GM12878 (cell line): ENCODE measurements at regions of chr2 and their contacts with region 1.

Region 1: GRCh38 chr2:210503001-210503623 is 26.6 kb upstream of the LANCL1 start:
- DNase-seq: no peak
- ATAC-seq: peak; percentile 89
- H3K4me3 ChIP-seq: no peak overlapping the region
- H3K27ac ChIP-seq: no peak overlapping the region
- H3K4me1 ChIP-seq: no peaks in the 10 kb centered on the region
- H3K27me3 ChIP-seq: no peaks in the 10 kb centered on the region
- CTCF ChIP-seq: peak; percentile 78 to 96 (median 91)
- EP300 ChIP-seq: no peak
- POLR2A ChIP-seq: no peak
- RAD21 ChIP-seq: peak; percentile 52; the same call in 1 of the 2 replicates

Region 2: DNA sequence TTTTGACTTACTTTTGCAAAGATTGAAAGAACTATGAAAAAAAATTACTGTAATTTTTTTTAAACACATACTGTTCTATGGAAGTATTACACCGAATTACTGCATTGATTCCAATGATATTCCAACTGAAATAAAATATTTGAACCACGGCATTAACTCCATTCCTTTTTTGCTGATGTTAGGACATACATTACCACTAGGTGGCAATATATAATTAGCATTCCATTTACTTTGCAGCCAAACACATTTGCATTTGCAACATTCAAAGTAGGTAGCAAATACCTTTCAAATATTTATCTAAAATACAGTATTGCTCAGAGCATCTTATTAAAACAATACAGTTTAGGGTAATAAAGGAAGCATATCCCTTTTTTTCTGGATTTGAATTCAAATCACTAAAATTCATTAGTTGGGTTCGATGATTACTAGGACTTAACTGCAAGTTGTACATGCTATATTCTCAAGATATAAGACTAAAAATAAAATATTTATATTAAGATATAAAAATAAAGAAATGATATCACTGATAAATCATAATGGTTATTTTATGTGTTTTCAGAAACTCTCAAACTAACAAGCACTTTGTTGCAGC is 57.9 kb before region 1 on chr2:
- CTCF ChIA-PET with region 1: interaction called, 13 read pairs
- POLR2A ChIA-PET with region 1: no interaction called
- RAD21 ChIA-PET with region 1: no interaction called
- SMC1A ChIA-PET with region 1: interaction called, 13 read pairs
- in situ Hi-C with region 1: no loop called
- intact Hi-C with region 1: loop called (anchors 2 kb)
- DNase-seq: no peak
- ATAC-seq: peak; percentile 58
- H3K4me3 ChIP-seq: no peak overlapping the region
- H3K27ac ChIP-seq: no peak overlapping the region
- H3K4me1 ChIP-seq: peaks cover 5% of the 10 kb centered on the region
- H3K27me3 ChIP-seq: no peaks in the 10 kb centered on the region
- CTCF ChIP-seq: peak; percentile 52 to 62 (median 53)
- EP300 ChIP-seq: no peak
- POLR2A ChIP-seq: no peak
- RAD21 ChIP-seq: peak; percentile 64

Region 3: GRCh38 chr2:210476194-210477128 is 26.7 kb before region 1 on chr2 and contains the start of gene LANCL1:
- CTCF ChIA-PET with region 1: interaction called, 20 read pairs
- POLR2A ChIA-PET with region 1: interaction called, 3 read pairs
- RAD21 ChIA-PET with region 1: interaction called, 3 read pairs
- SMC1A ChIA-PET with region 1: interaction called, 12 read pairs
- in situ Hi-C with region 1: no loop called
- intact Hi-C with region 1: no loop called
- DNase-seq: peak; percentile 67
- ATAC-seq: peak; percentile 100
- H3K4me3 ChIP-seq: peak within 1 kb of the TSS; percentile 90
- H3K27ac ChIP-seq: peak within 1 kb of the TSS; percentile 80
- H3K4me1 ChIP-seq: no peaks in the 10 kb centered on the region
- H3K27me3 ChIP-seq: no peaks in the 10 kb centered on the region
- CTCF ChIP-seq: no peak; a peak in 1 of 6 replicates
- EP300 ChIP-seq: no peak
- POLR2A ChIP-seq: peak; percentile 90
- RAD21 ChIP-seq: no peak
- polyA plus RNA-seq, gene LANCL1: 13.6 to 18.4 TPM

Region 4: GRCh38 chr2:210519594-210519993 is 16.5 kb after region 1 on chr2:
- CTCF ChIA-PET with region 1: interaction called, 37 read pairs
- POLR2A ChIA-PET with region 1: no interaction called
- RAD21 ChIA-PET with region 1: interaction called, 3 read pairs
- SMC1A ChIA-PET with region 1: interaction called, 6 read pairs
- in situ Hi-C with region 1: no loop called
- intact Hi-C with region 1: no loop called
- DNase-seq: no peak
- ATAC-seq: no peak
- H3K4me3 ChIP-seq: no peak overlapping the region
- H3K27ac ChIP-seq: no peak overlapping the region
- H3K4me1 ChIP-seq: no peaks in the 10 kb centered on the region
- H3K27me3 ChIP-seq: no peaks in the 10 kb centered on the region
- CTCF ChIP-seq: no peak
- EP300 ChIP-seq: no peak
- POLR2A ChIP-seq: no peak
- RAD21 ChIP-seq: no peak

Region 5: GRCh38 chr2:210551001-210551400 is 47.9 kb after region 1 on chr2:
- CTCF ChIA-PET with region 1: interaction called, 11 read pairs
- POLR2A ChIA-PET with region 1: no interaction called
- RAD21 ChIA-PET with region 1: no interaction called
- SMC1A ChIA-PET with region 1: interaction called, 7 read pairs
- in situ Hi-C with region 1: no loop called
- intact Hi-C with region 1: no loop called
- DNase-seq: no peak
- ATAC-seq: no peak
- H3K4me3 ChIP-seq: no peak overlapping the region
- H3K27ac ChIP-seq: no peak overlapping the region
- H3K4me1 ChIP-seq: no peaks in the 10 kb centered on the region
- H3K27me3 ChIP-seq: no peaks in the 10 kb centered on the region
- CTCF ChIP-seq: no peak
- EP300 ChIP-seq: no peak
- POLR2A ChIP-seq: no peak
- RAD21 ChIP-seq: no peak